ENCODE measurements at regions of chr4 and their contacts with region 1.

Region 1: GRCh38 chr4:52712172-52712990 is 38.8 kb downstream of the ERVMER34-1 start:
- DNase-seq: peak; percentile 97
- H3K4me3 Mint-ChIP-seq: peak overlapping the region; percentile 93
- H3K27ac Mint-ChIP-seq: peak overlapping the region; percentile 94
- H3K4me1 Mint-ChIP-seq: peaks cover 42% of the 10 kb centered on the region
- H3K27me3 Mint-ChIP-seq: no peaks in the 10 kb centered on the region

Region 2: DNA sequence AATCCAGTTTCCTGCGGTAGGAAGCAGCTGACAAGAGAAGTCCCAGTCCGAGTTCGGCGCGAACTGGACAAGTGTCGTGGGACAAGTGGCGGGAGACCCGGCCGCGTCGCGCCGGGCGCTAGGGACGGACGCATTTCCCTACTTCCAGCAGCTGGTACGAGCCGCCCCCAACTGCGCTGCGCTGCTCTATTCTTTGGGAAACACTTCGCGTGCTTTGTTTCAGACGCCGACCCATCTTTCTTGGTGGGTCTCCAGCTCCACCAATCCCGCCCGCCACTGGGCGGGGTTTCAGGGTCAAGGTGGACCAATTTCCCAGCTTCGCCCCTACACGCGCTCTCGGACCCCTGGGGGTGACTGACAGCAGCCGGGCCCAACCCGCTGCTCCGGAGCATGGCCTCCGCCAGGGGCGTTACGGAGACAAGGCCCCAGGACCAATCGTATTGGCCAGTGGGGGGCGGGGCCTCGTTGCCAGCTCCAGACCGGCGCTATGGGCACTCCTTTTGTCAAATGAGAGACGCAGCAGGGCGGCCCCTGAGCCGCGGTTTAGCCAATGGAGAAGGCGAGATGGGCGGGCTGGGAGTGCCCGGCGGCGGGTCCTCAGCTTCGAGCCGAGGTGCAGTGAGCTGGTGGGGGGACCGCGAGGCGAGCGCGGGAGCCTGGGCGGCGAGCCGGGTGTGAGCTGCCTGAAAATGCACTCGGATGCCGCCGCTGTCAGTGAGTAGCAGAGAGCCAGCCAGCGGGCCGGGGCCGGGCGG is 869.6 kb before region 1 on chr4 and contains the start of gene DCUN1D4:
- intact Hi-C with region 1: loop called (anchors 5 kb)
- DNase-seq: peak; percentile 98
- H3K4me3 Mint-ChIP-seq: peak within 1 kb of the TSS; percentile 91
- H3K27ac Mint-ChIP-seq: peak within 1 kb of the TSS; percentile 96
- H3K4me1 Mint-ChIP-seq: peaks cover 16% of the 10 kb centered on the region
- H3K27me3 Mint-ChIP-seq: no peaks in the 10 kb centered on the region
- total RNA-seq, gene DCUN1D4: 31.5 and 32.6 TPM in 2 replicates

Region 3: GRCh38 chr4:52588097-52588782 is 124.1 kb before region 1 on chr4:
- intact Hi-C with region 1: loop called (anchors 5 kb)
- DNase-seq: no peak
- H3K4me3 Mint-ChIP-seq: no peak overlapping the region
- H3K27ac Mint-ChIP-seq: peak overlapping the region; percentile 53
- H3K4me1 Mint-ChIP-seq: peaks cover 17% of the 10 kb centered on the region
- H3K27me3 Mint-ChIP-seq: peaks cover 3% of the 10 kb centered on the region

Region 4: GRCh38 chr4:52612346-52612745 is 100.0 kb before region 1 on chr4:
- intact Hi-C with region 1: no loop called
- DNase-seq: no peak
- H3K4me3 Mint-ChIP-seq: no peak overlapping the region
- H3K27ac Mint-ChIP-seq: no peak overlapping the region
- H3K4me1 Mint-ChIP-seq: peaks cover 6% of the 10 kb centered on the region
- H3K27me3 Mint-ChIP-seq: no peaks in the 10 kb centered on the region

Region 5: GRCh38 chr4:52861879-52862616 is 149.7 kb after region 1 on chr4 and contains the start of gene RASL11B:
- intact Hi-C with region 1: loop called (anchors 1 kb)
- DNase-seq: peak; percentile 77
- H3K4me3 Mint-ChIP-seq: peak within 1 kb of the TSS; percentile 74
- H3K27ac Mint-ChIP-seq: no peak within 1 kb of the TSS
- H3K4me1 Mint-ChIP-seq: peaks cover 5% of the 10 kb centered on the region
- H3K27me3 Mint-ChIP-seq: peaks cover 24% of the 10 kb centered on the region
- total RNA-seq, gene RASL11B: 0.50 and 0.67 TPM in 2 replicates

Region 6: DNA sequence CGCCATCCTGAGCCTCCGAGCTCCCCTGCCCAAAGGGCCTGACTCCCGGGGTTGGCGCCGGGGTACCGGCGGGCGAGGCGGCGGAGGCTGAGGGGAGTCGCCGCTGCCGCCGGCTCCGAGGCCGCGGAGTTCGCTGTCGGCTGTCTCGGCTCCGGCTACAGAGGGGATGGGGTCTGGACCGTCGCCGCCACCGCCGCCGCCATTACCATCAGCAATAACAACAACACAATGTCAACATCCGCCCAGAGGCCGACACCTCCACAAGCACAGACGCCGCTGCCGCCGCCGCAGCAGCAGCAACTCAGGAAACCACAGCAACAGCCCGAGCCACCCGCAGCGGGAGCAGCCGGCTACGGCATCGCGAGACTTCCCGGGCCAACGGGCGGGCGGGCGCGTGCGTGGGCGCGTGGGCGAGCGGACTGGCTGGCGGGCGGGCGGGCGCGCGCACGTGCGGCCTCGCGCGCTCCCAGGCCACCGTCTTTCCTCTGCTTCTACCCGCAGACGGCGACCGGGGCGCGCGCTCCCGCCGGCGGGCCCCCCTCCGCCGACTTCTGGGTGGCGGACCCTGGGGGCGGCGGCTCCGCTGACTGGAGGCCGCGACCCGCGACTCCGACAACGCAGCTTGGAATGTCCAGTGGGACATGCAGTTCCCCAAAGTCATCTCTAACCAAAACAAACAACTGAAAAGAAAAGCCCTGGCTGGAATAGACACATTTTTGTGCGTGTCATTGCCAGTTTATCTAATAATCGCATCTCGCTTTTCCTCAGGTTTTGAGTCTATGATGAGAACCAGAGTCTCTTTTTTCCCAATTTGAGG is 1352.1 kb after region 1 on chr4 and contains the start of gene CHIC2:
- intact Hi-C with region 1: loop called (anchors 1 kb)
- DNase-seq: peak; percentile 96
- H3K4me3 Mint-ChIP-seq: peak within 1 kb of the TSS; percentile 92
- H3K27ac Mint-ChIP-seq: peak within 1 kb of the TSS; percentile 87
- H3K4me1 Mint-ChIP-seq: peaks cover 48% of the 10 kb centered on the region
- H3K27me3 Mint-ChIP-seq: peaks cover 3% of the 10 kb centered on the region
- total RNA-seq, gene CHIC2: 18.8 and 22.5 TPM in 2 replicates